GM12878 (cell line): ENCODE measurements at regions of chr5 and their contacts with region 1.

Region 1: DNA sequence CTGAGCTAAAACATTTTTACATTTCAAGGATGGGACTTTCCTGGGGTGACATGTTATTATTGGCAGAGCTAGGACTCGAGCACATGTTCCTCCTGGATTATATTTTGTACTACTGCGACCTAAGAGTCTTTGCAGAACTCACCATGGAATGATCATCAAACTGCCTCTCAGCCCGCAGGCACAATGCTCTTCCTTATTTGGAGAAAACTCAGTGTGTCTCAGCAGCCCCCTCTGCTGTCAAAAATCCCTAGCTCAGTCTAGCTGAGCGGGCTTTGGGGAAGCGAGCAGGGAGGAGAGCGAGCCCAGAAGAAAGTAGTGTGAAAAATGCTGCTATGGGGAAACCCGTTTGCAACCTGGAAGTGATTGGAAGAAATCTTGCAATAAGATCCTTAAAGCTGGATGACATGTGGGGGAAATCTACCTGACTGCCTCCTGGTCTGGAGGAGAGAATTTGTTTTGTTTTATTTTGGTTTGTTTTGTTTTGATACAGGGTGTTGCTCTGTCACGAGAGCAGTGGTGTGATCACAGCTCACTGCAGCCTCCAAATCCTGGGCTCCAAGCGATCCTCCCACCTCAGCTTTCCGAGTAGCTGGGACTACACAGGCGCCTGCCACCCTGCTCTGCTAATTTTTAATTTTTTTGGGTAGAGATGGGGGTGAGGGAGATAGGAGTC is 89.9 kb upstream of the CLINT1 start:
- DNase-seq: peak; percentile 44
- ATAC-seq: peak; percentile 100
- H3K4me3 ChIP-seq: no peak overlapping the region
- H3K27ac ChIP-seq: no peak overlapping the region
- H3K4me1 ChIP-seq: no peaks in the 10 kb centered on the region
- H3K27me3 ChIP-seq: no peaks in the 10 kb centered on the region
- CTCF ChIP-seq: peak; percentile 83 to 94 (median 84)
- EP300 ChIP-seq: no peak
- POLR2A ChIP-seq: no peak
- RAD21 ChIP-seq: peak; percentile 80

Region 2: DNA sequence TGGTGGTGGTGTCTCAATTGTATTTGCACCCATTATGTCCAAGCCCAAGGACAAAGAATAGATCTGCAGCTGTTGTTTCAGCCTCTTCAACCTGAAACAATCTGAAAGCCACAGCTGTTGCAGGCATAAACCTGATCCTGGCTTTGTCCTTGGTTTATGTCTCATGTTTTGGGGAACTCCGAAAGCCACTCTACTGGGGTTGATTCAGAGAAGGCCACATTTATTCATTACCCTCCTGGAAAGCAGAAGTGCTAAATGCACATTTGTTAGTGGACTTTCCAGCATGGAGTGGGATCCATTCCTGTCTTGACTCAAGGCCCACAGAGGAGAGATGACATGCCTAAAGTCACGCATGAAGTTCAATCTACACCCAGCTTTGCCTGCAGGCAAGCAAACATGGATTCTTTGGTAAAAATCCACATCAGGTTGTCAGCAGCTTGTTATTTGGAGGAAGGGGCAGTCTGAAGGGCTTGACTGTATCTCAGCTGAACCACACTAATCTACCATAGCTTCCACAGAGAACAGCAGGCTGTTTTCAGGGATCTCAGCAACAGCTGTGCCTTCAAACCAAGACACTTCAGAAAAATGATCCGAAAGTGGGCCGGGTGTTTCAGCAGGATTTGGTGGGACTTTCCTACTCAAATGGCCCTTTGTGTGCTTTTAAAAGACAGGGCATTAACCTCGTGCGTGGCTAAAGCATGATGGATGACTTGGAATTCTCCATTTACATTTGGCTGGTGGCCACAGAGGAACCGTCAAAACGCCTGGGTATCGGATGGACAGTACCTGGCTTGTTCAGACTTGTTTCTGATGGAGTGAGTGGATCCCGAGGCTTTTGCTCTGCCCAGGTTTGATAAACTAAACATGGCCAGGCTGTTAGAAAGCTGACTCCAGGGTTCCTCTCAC is 337.1 kb before region 1 on chr5:
- CTCF ChIA-PET with region 1: no interaction called
- POLR2A ChIA-PET with region 1: no interaction called
- RAD21 ChIA-PET with region 1: no interaction called
- SMC1A ChIA-PET with region 1: no interaction called
- in situ Hi-C with region 1: no loop called
- intact Hi-C with region 1: no loop called
- DNase-seq: peak; percentile 79
- ATAC-seq: peak; percentile 82
- H3K4me3 ChIP-seq: no peak overlapping the region
- H3K27ac ChIP-seq: peak overlapping the region; percentile 69
- H3K4me1 ChIP-seq: peaks cover 38% of the 10 kb centered on the region
- H3K27me3 ChIP-seq: no peaks in the 10 kb centered on the region
- CTCF ChIP-seq: no peak
- EP300 ChIP-seq: peak; percentile 46 to 80; a peak in 1 of 4 replicates
- POLR2A ChIP-seq: no peak
- RAD21 ChIP-seq: no peak

Region 3: DNA sequence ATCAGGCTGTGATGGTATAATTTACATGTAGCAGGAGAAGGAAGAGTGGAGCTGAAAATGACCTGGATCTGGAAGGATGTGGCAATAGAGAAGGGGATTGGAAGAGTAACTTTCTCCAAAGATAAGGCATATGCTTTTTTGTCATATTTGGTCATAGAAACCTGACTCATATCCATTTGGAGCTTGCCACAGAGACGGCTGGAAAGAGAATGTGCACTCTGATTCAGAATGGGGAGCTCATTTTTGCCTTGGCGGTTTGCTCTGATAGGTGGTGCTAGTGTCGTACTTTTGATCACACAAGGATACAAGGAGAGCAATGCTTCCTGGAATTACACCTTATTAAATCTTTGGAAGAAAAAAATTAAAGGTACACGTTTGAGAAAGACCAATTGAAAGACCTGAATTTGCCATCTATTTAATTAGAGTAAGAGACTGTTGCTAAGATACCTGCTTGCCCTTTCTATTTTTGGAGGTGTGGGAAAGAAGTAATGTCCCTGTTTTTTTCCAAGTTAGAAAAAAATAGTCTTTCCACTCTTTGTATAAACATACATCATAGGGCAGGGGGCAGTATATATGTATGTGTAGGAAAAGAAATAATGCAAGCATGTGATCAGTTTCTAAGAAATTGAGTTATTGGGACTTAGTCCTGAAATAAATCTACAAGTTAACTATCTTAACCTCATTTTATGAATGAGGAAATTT is 200.0 kb before region 1 on chr5:
- CTCF ChIA-PET with region 1: interaction called, 10 read pairs
- POLR2A ChIA-PET with region 1: no interaction called
- RAD21 ChIA-PET with region 1: no interaction called
- SMC1A ChIA-PET with region 1: interaction called, 4 read pairs
- in situ Hi-C with region 1: no loop called
- intact Hi-C with region 1: no loop called
- DNase-seq: no peak
- ATAC-seq: no peak
- H3K4me3 ChIP-seq: no peak overlapping the region
- H3K27ac ChIP-seq: no peak overlapping the region
- H3K4me1 ChIP-seq: peaks cover 7% of the 10 kb centered on the region; the same call in 1 of the 2 replicates
- H3K27me3 ChIP-seq: no peaks in the 10 kb centered on the region
- CTCF ChIP-seq: no peak
- EP300 ChIP-seq: no peak
- POLR2A ChIP-seq: no peak
- RAD21 ChIP-seq: no peak

Region 4: DNA sequence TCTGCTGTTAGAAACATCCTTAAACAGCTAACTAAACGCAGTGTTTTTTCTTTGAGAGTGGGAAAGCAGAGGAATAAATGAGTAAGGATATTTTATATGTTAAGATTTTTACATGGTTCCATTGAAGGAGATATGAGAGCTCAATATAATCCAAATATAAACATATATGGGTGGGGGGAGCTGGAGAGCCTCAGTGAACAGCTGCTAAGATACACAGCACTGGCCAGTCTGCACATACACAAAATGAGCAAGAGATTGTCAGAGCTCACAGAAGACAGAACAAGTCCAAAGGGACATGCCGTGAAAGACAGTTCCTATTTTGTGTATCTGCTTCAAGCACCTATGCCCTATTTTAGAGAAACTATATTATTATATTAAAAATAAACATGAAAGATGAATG is 136.8 kb before region 1 on chr5:
- CTCF ChIA-PET with region 1: interaction called, 201 read pairs
- POLR2A ChIA-PET with region 1: interaction called, 3 read pairs
- RAD21 ChIA-PET with region 1: interaction called, 63 read pairs
- SMC1A ChIA-PET with region 1: interaction called, 82 read pairs
- in situ Hi-C with region 1: no loop called
- intact Hi-C with region 1: loop called (anchors 1 kb)
- DNase-seq: no peak
- ATAC-seq: no peak
- H3K4me3 ChIP-seq: no peak overlapping the region
- H3K27ac ChIP-seq: no peak overlapping the region
- H3K4me1 ChIP-seq: no peaks in the 10 kb centered on the region
- H3K27me3 ChIP-seq: no peaks in the 10 kb centered on the region
- CTCF ChIP-seq: no peak
- EP300 ChIP-seq: no peak
- POLR2A ChIP-seq: no peak
- RAD21 ChIP-seq: no peak

Region 5: GRCh38 chr5:157828944-157829632 is 119.8 kb before region 1 on chr5:
- CTCF ChIA-PET with region 1: interaction called, 20 read pairs
- POLR2A ChIA-PET with region 1: no interaction called
- RAD21 ChIA-PET with region 1: interaction called, 9 read pairs
- SMC1A ChIA-PET with region 1: interaction called, 25 read pairs
- in situ Hi-C with region 1: loop called (anchors 5 kb)
- intact Hi-C with region 1: no loop called
- DNase-seq: no peak
- ATAC-seq: peak; percentile 71
- H3K4me3 ChIP-seq: no peak overlapping the region
- H3K27ac ChIP-seq: no peak overlapping the region
- H3K4me1 ChIP-seq: peaks cover 8% of the 10 kb centered on the region
- H3K27me3 ChIP-seq: no peaks in the 10 kb centered on the region
- CTCF ChIP-seq: peak; percentile 34 to 52 (median 35); a peak in 5 of 6 replicates
- EP300 ChIP-seq: no peak
- POLR2A ChIP-seq: no peak
- RAD21 ChIP-seq: no peak

Region 6: DNA sequence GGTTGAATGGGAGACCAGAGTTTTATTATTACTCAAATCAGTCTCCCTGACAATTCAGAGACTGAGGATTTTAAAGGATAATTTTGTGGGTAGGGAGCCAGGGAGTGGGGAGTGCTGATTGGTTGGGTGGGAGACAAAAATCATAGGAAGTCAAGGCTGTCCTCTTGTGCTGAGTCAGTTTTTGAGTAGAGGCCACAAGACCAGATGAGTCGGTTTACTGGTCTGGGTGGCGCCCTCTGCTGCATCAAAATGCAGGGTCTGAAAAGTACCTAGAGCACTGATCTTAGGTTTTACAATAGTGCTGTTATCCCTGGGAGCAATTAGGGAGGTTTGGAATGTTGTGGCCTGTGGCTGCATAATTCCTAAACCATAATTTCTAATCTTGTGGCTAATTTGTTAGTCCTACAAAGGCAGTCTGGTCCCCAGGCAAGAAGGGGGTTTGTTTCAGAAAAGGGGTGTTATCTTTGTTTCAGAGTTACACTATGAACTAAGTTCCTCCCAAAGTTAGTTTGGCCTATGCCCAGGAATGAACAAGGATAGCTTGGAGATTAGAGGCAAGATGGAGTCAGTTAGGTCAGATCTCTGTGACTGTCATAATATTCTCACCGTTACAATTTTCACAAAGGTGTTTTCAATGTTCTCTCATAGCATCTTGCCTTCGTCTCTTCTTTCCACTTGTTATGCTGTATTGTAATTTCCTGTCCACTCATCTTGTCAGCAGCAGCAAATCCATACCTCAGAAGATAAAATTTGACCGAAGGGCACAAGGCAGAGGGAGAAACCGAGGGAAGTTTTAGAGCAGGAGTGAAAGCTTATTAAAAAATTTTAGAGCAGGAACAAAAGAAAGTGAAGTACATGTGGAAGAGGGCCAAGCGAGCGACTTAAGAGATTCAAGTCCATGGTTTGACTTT is 30.7 kb before region 1 on chr5:
- CTCF ChIA-PET with region 1: interaction called, 21 read pairs
- POLR2A ChIA-PET with region 1: no interaction called
- RAD21 ChIA-PET with region 1: interaction called, 27 read pairs
- SMC1A ChIA-PET with region 1: interaction called, 9 read pairs
- in situ Hi-C with region 1: no loop called
- intact Hi-C with region 1: loop called (anchors 2 kb)
- DNase-seq: no peak
- ATAC-seq: peak; percentile 92
- H3K4me3 ChIP-seq: no peak overlapping the region
- H3K27ac ChIP-seq: no peak overlapping the region
- H3K4me1 ChIP-seq: no peaks in the 10 kb centered on the region; the same call in 1 of the 2 replicates
- H3K27me3 ChIP-seq: no peaks in the 10 kb centered on the region
- CTCF ChIP-seq: peak; percentile 64 to 71 (median 65)
- EP300 ChIP-seq: no peak
- POLR2A ChIP-seq: no peak
- RAD21 ChIP-seq: peak; percentile 81

Region 7: GRCh38 chr5:157930710-157931109 is 18.2 kb before region 1 on chr5:
- CTCF ChIA-PET with region 1: interaction called, 14 read pairs
- POLR2A ChIA-PET with region 1: no interaction called
- RAD21 ChIA-PET with region 1: no interaction called
- SMC1A ChIA-PET with region 1: interaction called, 7 read pairs
- in situ Hi-C with region 1: no loop called
- intact Hi-C with region 1: no loop called
- DNase-seq: no peak
- ATAC-seq: no peak
- H3K4me3 ChIP-seq: no peak overlapping the region
- H3K27ac ChIP-seq: no peak overlapping the region
- H3K4me1 ChIP-seq: no peaks in the 10 kb centered on the region
- H3K27me3 ChIP-seq: no peaks in the 10 kb centered on the region
- CTCF ChIP-seq: no peak
- EP300 ChIP-seq: no peak
- POLR2A ChIP-seq: no peak
- RAD21 ChIP-seq: no peak